CD4-positive, alpha-beta T cell (primary cell): ENCODE measurements at regions of chr11 and their contacts with region 1.

Region 1: GRCh38 chr11:2400069-2400760 is at the start of gene TSSC4:
- DNase-seq: peak; percentile 98 to 100 (median 99)
- ATAC-seq: peak; percentile 83
- H3K4me3 ChIP-seq: peak within 1 kb of the TSS; percentile 89
- H3K4me3 Mint-ChIP-seq: peak within 1 kb of the TSS; percentile 98
- H3K27ac ChIP-seq: peak within 1 kb of the TSS; percentile 95 to 99
- H3K27ac Mint-ChIP-seq: peak within 1 kb of the TSS; percentile 97
- H3K4me1 ChIP-seq: peaks cover 31% of the 10 kb centered on the region
- H3K4me1 Mint-ChIP-seq: peaks cover 17% of the 10 kb centered on the region
- H3K27me3 ChIP-seq: no peaks in the 10 kb centered on the region
- H3K27me3 Mint-ChIP-seq: no peaks in the 10 kb centered on the region
- CTCF ChIP-seq: peak; percentile 96
- total RNA-seq, gene TSSC4: 47.5 to 50.0 TPM

Region 2: GRCh38 chr11:1763796-1764661 is 636.2 kb before region 1 on chr11 and contains the start of gene CTSD:
- CTCF ChIA-PET with region 1: no interaction called
- POLR2A ChIA-PET with region 1: no interaction called
- intact Hi-C with region 1: loop called in 1 of 2 experiments (anchors 5 kb)
- DNase-seq: peak; percentile 66 to 92 (median 86)
- ATAC-seq: peak; percentile 86
- H3K4me3 ChIP-seq: peak within 1 kb of the TSS; percentile 72
- H3K4me3 Mint-ChIP-seq: peak within 1 kb of the TSS; percentile 95
- H3K27ac ChIP-seq: peak within 1 kb of the TSS; percentile 55 to 65
- H3K27ac Mint-ChIP-seq: peak within 1 kb of the TSS; percentile 81
- H3K4me1 ChIP-seq: peaks cover 54% of the 10 kb centered on the region
- H3K4me1 Mint-ChIP-seq: peaks cover 29% of the 10 kb centered on the region
- H3K27me3 ChIP-seq: peaks cover 0 to 2% of the 10 kb centered on the region in 2 experiments
- H3K27me3 Mint-ChIP-seq: no peaks in the 10 kb centered on the region
- CTCF ChIP-seq: no peak
- total RNA-seq, gene CTSD: 63.3 to 71.3 TPM

Region 3: GRCh38 chr11:2208691-2209369 is 191.4 kb before region 1 on chr11:
- CTCF ChIA-PET with region 1: no interaction called
- POLR2A ChIA-PET with region 1: no interaction called
- intact Hi-C with region 1: no loop called
- DNase-seq: peak in 1 of 14 experiments; percentile 27
- ATAC-seq: no peak
- H3K4me3 ChIP-seq: no peak overlapping the region
- H3K4me3 Mint-ChIP-seq: no peak overlapping the region
- H3K27ac ChIP-seq: no peak overlapping the region
- H3K27ac Mint-ChIP-seq: no peak overlapping the region
- H3K4me1 ChIP-seq: peaks cover 14% of the 10 kb centered on the region
- H3K4me1 Mint-ChIP-seq: peaks cover 7% of the 10 kb centered on the region
- H3K27me3 ChIP-seq: no peaks in the 10 kb centered on the region
- H3K27me3 Mint-ChIP-seq: no peaks in the 10 kb centered on the region
- CTCF ChIP-seq: no peak

Region 4: GRCh38 chr11:2298795-2299761 is 101.1 kb before region 1 on chr11:
- CTCF ChIA-PET with region 1: interaction called, 6 read pairs
- POLR2A ChIA-PET with region 1: interaction called, 24 read pairs
- intact Hi-C with region 1: loop called in 1 of 2 experiments (anchors 5 kb)
- DNase-seq: peak in 4 of 14 experiments; percentile 18 to 31 (median 23)
- ATAC-seq: no peak
- H3K4me3 ChIP-seq: no peak overlapping the region
- H3K4me3 Mint-ChIP-seq: peak overlapping the region; percentile 87
- H3K27ac ChIP-seq: peak overlapping the region; percentile 12 to 54
- H3K27ac Mint-ChIP-seq: peak overlapping the region; percentile 89
- H3K4me1 ChIP-seq: peaks cover 49% of the 10 kb centered on the region
- H3K4me1 Mint-ChIP-seq: peaks cover 53% of the 10 kb centered on the region
- H3K27me3 ChIP-seq: no peaks in the 10 kb centered on the region
- H3K27me3 Mint-ChIP-seq: no peaks in the 10 kb centered on the region
- CTCF ChIP-seq: peak; percentile 22

Region 5: GRCh38 chr11:2387266-2387987 is 12.8 kb before region 1 on chr11:
- CTCF ChIA-PET with region 1: interaction called, 5 read pairs
- POLR2A ChIA-PET with region 1: interaction called, 20 read pairs
- intact Hi-C with region 1: no loop called
- DNase-seq: peak in 3 of 14 experiments; percentile 58 to 69 (median 61)
- ATAC-seq: peak; percentile 25
- H3K4me3 ChIP-seq: peak overlapping the region; percentile 7
- H3K4me3 Mint-ChIP-seq: peak overlapping the region; percentile 34
- H3K27ac ChIP-seq: peak overlapping the region in 1 of 2 donors; percentile 58
- H3K27ac Mint-ChIP-seq: peak overlapping the region; percentile 56
- H3K4me1 ChIP-seq: peaks cover 90% of the 10 kb centered on the region
- H3K4me1 Mint-ChIP-seq: peaks cover 62% of the 10 kb centered on the region
- H3K27me3 ChIP-seq: no peaks in the 10 kb centered on the region
- H3K27me3 Mint-ChIP-seq: no peaks in the 10 kb centered on the region
- CTCF ChIP-seq: no peak

Region 6: GRCh38 chr11:3057069-3057963 is 657.1 kb after region 1 on chr11 and contains the start of gene CARS1:
- CTCF ChIA-PET with region 1: no interaction called
- POLR2A ChIA-PET with region 1: no interaction called
- intact Hi-C with region 1: loop called in 1 of 2 experiments (anchors 10 kb)
- DNase-seq: peak; percentile 82 to 97 (median 91)
- ATAC-seq: peak; percentile 99
- H3K4me3 ChIP-seq: peak within 1 kb of the TSS; percentile 83
- H3K4me3 Mint-ChIP-seq: peak within 1 kb of the TSS; percentile 91
- H3K27ac ChIP-seq: peak within 1 kb of the TSS; percentile 63 to 73
- H3K27ac Mint-ChIP-seq: peak within 1 kb of the TSS; percentile 75
- H3K4me1 ChIP-seq: peaks cover 48% of the 10 kb centered on the region
- H3K4me1 Mint-ChIP-seq: peaks cover 37% of the 10 kb centered on the region
- H3K27me3 ChIP-seq: no peaks in the 10 kb centered on the region
- H3K27me3 Mint-ChIP-seq: no peaks in the 10 kb centered on the region
- CTCF ChIP-seq: no peak
- total RNA-seq, gene CARS1: 24.1 to 25.2 TPM